ENCODE measurements at regions of chr7 and their contacts with region 1.

Region 1: DNA sequence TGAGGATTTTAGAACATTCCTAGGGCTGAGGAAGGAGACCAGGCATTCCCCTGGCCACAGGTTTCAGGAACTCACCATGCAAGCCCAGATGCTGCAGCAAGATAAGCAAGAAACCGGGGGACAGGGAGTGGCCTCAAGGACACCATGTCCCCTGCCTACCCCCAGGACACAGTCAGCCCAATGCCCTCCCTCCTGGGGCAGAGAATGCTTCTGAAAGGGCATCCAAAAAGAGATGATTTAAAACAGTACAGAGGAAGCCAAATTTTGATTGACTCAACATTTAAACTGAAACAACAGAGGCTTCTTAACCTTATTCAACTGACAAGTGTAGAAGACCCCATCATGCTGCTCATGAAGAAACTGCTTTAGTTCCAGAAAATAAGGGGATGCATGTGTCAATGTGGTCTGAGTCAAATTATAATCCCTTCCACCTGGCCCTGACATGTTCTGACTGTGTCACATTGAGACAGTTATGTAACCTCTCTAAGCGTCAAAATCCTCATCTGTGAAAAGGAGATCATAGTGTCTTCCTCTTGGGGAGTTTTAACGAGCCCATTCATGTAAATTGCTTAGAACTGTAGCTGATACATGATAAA is 60.0 kb downstream of the ICA1 start:
- DNase-seq: no peak
- ATAC-seq: peak in 1 of 4 donors; percentile 47
- H3K4me3 ChIP-seq: no peak overlapping the region
- H3K27ac ChIP-seq: no peak overlapping the region
- H3K4me1 ChIP-seq: no peaks in the 10 kb centered on the region
- H3K27me3 ChIP-seq: no peaks in the 10 kb centered on the region
- CTCF ChIP-seq: no peak

Region 2: DNA sequence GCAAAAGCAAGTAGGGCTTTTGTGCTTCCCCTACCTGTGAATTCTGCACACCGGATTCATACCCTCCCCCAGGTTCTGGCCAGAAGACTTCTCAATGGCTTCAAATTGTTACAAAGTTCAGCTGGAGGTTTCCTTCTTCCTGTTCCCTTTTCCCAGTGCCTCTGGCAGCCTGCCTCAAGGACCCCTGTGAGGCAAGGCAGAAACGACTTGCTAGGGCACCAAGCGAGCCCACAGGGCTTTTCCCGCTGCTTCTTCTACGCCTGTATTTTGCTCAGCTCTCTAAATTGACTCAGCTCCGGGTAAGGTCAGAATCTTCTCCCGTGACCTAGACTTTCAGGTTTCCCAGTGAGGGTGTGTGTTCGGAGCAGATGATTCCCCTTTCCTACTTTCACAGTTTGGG is 898.2 kb before region 1 on chr7:
- intact Hi-C with region 1: no loop called
- DNase-seq: no peak
- ATAC-seq: no peak
- H3K4me3 ChIP-seq: no peak overlapping the region
- H3K27ac ChIP-seq: no peak overlapping the region
- H3K4me1 ChIP-seq: no peaks in the 10 kb centered on the region
- H3K27me3 ChIP-seq: no peaks in the 10 kb centered on the region
- CTCF ChIP-seq: no peak

Region 3: DNA sequence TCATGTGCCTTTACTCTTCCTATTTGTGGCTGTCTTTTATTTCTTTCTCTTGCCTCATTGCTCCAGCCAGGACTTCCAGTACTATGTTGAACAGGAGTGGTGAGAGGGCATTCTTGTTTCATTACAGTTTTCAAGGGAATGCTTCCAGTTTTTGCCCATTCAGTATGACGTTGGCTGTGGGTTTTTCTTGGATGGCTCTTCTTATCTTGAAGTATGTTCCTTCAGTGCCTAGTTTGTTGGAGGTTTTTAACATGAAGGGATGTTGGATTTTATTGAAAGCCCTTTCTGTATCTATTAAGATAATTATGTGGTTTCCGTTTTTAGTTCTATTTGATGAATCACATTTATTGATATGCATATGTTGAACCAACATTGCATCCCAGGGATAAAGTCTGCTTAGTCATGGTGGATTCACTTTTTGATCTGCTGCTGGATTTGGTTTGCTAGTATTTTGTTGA is 136.6 kb before region 1 on chr7:
- intact Hi-C with region 1: loop called in 1 of 2 experiments (anchors 10 kb)
- DNase-seq: no peak
- ATAC-seq: no peak
- H3K4me3 ChIP-seq: no peak overlapping the region
- H3K27ac ChIP-seq: no peak overlapping the region
- H3K4me1 ChIP-seq: peaks cover 10% of the 10 kb centered on the region
- H3K27me3 ChIP-seq: no peaks in the 10 kb centered on the region
- CTCF ChIP-seq: no peak

Region 4: GRCh38 chr7:8143151-8143874 is 58.6 kb before region 1 on chr7:
- intact Hi-C with region 1: no loop called
- DNase-seq: peak in 1 of 2 donors; percentile 74
- ATAC-seq: peak; percentile 87 to 98 (median 96)
- H3K4me3 ChIP-seq: no peak overlapping the region
- H3K27ac ChIP-seq: no peak overlapping the region
- H3K4me1 ChIP-seq: peaks cover 8% of the 10 kb centered on the region
- H3K27me3 ChIP-seq: no peaks in the 10 kb centered on the region
- CTCF ChIP-seq: no peak

Region 5: GRCh38 chr7:8465338-8465737 is 263.4 kb after region 1 on chr7:
- intact Hi-C with region 1: no loop called
- DNase-seq: no peak
- ATAC-seq: no peak
- H3K4me3 ChIP-seq: no peak overlapping the region
- H3K27ac ChIP-seq: no peak overlapping the region
- H3K4me1 ChIP-seq: no peaks in the 10 kb centered on the region
- H3K27me3 ChIP-seq: no peaks in the 10 kb centered on the region
- CTCF ChIP-seq: no peak